Cardiac septum (tissue), 1 donor: ENCODE measurements at regions of chr16 and their contacts with region 1.

Region 1: DNA sequence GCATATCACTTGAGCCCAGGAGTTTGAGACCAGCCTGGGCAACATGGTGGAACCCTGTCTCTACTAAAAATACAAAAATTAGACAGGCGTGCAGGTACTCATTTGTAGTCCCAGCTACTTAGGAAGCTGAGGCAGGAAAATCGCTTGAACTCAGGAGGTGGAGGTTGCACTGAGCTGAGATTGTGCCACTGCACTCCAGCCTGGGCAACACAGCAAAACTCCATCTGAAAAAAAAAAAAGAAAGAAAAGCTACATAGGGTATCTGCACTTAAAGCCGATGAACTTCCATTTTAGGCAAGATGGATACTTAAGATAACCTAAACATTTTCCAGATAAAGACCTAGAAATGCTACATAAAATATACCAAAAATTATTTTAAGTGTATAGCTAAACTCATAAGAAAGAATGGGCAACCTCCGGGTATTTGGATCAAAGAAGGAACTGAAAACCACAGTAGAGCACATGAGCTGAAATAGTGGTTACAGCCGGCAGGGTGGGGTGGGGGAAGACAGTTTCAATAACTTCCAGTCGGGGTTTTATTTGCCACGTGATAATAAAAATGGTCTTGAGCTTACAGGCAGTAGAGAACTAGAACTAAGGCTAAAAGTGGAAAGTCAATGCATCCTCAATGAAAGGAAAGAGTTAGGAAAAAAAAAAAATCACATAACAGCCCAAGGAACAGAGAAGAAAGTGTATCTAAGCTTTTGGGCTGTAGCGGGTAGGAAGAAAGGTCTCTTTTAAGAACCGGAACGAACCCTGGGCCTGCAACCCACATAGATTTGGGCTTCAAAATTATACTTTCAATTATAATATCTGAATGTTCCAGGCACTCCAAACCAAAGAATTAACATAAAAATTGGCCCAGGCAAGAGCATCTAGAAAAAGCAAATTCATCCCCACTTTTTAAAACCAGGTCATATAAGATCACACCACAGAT is 53.1 kb downstream of the CFDP1 start:
- DNase-seq: no peak

Region 2: GRCh38 chr16:75206749-75207451 is 173.3 kb before region 1 on chr16 and contains the start of gene CTRB2:
- intact Hi-C with region 1: loop called (anchors 5 kb)
- DNase-seq: no peak
- total RNA-seq, gene CTRB2: not detected

Region 3: DNA sequence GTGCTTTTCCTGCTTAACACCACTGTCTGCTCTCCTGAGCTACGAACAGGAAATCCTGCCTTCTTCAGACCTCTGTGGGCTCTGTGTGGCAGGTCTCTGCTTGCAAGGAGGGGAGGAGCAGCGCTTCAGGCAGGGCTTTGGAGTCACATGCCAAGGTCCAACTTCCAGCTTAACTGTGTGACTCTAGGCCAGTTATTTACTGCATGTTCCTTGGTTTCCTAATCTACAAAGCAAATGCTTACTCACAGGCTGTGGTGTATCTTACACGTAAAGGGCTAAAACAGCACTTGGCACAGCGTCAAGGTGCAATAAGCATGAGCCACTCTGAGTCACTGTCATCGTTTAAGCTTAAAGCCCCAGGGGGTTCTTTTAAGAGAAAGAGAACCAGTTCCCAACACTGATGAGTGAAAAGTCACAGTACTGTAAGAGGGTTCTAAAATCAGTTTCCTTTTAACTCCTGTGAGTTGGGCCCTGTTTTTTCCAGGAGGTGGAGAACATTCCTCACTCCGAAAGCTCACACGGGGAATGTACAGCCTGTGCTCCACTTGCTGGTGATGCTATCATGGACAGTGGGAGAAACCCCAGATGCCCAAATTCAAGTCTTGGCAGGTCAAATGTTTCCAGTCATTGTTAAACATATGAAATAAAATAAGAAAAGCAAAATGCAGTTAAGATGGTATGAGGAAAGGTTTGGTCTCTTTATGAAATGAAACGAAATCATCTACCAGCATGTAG is 74.6 kb before region 1 on chr16:
- intact Hi-C with region 1: loop called (anchors 5 kb)
- DNase-seq: peak; percentile 80

Region 4: GRCh38 chr16:75342308-75342829 is 37.8 kb before region 1 on chr16:
- intact Hi-C with region 1: loop called (anchors 5 kb)
- DNase-seq: no peak